Heart right ventricle (tissue), 16 donors: ENCODE measurements at regions of chr1 and their contacts with region 1.

Region 1: GRCh38 chr1:235415008-235415904 is 48.0 kb downstream of the TBCE start:
- DNase-seq: peak; percentile 37 to 51
- ATAC-seq: peak; percentile 52 to 82 (median 78)
- H3K4me3 ChIP-seq: no peak overlapping the region
- H3K27ac ChIP-seq: no peak overlapping the region
- H3K4me1 ChIP-seq: peaks cover 0 to 12% (median 3%) of the 10 kb centered on the region in 9 donors
- H3K27me3 ChIP-seq: no peaks in the 10 kb centered on the region
- CTCF ChIP-seq: peak; percentile 50 to 83 (median 76)

Region 2: DNA sequence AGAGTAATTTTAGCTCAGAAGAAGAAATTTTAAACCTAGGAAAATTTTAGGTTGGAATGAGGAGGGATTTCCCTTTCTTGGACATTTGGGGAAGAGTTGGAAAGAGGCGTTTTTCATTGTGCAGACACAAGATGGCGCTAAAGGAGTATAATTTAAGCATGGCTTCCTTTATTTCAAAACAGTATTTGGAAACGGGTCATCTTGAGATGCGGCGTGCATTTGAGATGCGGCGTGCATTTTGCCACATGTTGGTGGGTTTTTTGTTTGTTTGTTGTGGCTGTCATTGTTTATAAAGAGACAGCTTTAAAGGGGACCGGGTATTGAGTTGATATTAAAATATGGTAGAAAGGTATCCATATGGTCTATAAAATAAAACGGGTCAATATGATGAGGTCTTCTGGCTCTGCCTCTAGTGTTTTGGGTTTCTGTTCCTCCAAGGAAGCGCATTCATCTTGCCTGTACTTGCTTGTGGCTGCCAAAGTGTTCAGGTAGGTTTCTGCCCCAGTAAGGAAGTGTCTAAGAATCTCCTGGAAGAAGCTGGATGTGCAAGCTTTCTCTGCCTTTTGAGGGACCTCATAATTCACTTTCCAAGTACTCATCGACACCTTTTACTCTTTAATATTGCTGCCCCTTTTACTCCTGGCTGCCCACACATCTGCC is 1300.5 kb before region 1 on chr1:
- intact Hi-C with region 1: loop called in 1 of 10 experiments (anchors 10 kb)
- DNase-seq: peak in 1 of 2 donors; percentile 26
- ATAC-seq: no peak
- H3K4me3 ChIP-seq: no peak overlapping the region
- H3K27ac ChIP-seq: no peak overlapping the region
- H3K4me1 ChIP-seq: no peaks in the 10 kb centered on the region
- H3K27me3 ChIP-seq: peaks cover 0 to 24% (median 3%) of the 10 kb centered on the region in 7 donors
- CTCF ChIP-seq: peak; percentile 27 to 78 (median 70)

Region 3: DNA sequence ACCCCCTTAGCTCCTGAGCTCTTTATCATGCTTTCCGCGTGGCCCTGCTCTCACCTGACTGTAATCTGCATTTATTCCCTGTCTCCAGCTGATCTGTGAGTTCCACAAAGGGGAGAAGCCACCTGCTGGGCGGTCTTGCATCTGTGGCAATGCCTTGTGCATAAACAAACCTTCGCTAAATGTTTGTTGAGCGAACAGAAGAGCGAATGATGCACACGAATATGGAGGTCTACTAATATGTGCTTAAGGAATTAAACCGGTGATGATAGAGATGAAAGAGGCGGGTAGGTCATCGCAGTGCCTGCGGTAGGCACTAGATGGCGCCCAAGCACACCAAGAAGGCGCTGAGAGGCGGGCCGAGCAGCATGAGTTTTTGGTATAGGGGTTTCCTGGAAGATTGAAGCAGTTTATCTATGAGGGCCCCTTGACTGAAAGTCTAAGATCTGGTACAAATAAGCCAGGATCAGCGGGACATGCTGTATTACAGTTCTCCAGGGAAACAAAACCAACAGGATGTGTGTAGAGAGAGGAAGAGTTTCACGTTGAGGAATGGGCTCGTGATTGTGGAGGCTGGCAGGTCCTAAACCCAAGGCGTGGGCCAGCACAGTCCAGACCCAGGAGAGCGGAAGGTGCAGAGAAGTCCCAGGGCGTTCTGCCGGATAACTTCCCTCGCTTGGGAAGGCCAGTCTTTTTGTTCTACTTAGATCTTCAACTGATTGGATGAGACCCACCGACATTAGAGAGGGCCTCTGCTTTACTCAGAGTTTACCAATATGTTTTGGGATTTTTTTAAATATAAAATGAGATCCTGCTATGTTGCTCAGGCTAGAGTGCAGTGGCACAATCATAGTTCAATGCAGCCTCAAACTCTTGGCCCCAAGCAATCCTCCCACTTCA is 321.3 kb before region 1 on chr1:
- intact Hi-C with region 1: loop called in 1 of 10 experiments (anchors 10 kb)
- DNase-seq: peak; percentile 73 to 80
- ATAC-seq: peak; percentile 62 to 88 (median 80)
- H3K4me3 ChIP-seq: peak overlapping the region in 9 of 10 donors; percentile 11 to 50 (median 33)
- H3K27ac ChIP-seq: peak overlapping the region in 5 of 10 donors; percentile 24 to 67 (median 36)
- H3K4me1 ChIP-seq: peaks cover 3 to 15% (median 12%) of the 10 kb centered on the region in 9 donors
- H3K27me3 ChIP-seq: no peaks in the 10 kb centered on the region
- CTCF ChIP-seq: peak; percentile 86 to 94 (median 89)

Region 4: DNA sequence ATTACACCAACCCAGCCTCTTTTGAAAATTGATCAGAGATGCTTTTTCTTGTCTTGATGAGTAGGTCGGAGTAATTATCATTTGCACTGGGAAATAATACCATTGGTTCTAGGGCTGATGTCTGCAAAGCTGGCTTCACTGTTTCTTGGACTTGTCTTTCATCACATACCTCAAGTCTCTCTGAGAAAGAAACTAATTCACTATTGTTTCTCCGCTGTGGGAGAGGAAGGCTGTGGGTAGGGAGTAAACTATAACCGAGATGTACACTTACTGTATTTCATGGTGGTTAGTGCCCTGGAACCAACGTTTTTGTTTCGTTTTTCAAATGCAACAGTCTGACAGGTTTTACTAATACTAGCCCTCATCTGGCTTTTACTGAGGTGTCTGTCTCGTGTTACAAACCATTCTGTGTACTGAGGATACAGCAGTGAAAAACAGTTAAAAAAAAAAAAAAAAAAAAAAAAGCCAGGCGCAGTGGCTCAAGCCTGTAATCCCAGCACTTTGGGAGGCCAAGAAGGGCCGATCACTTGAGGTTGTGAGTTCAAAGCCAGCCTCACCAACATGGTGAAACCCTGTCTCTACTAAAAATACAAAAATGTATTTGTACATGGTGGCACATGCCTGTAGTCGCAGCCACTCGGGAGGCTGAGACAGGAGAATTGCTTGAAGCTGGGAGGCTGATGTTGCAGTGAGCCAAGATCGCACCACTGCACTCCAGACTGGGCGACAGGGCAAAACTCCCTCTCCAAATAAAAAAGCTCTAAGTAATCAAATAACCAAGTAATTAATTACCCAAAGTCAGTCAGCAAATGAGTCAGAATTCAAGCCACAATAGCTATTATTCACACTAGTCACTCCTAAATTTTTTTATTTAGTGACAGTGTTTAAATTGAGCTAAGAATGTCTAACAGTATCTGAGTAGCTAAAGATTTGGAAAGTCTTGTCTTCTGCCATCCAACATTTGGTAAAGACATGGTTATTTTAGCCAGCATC is 309.9 kb before region 1 on chr1:
- intact Hi-C with region 1: loop called in 6 of 10 experiments (anchors 2 to 10 kb)
- DNase-seq: no peak
- ATAC-seq: no peak
- H3K4me3 ChIP-seq: peak overlapping the region in 1 of 10 donors; percentile 14
- H3K27ac ChIP-seq: no peak overlapping the region
- H3K4me1 ChIP-seq: peaks cover 3 to 10% (median 6%) of the 10 kb centered on the region in 9 donors
- H3K27me3 ChIP-seq: no peaks in the 10 kb centered on the region
- CTCF ChIP-seq: no peak

Region 5: GRCh38 chr1:235286667-235287066 is 128.6 kb before region 1 on chr1:
- intact Hi-C with region 1: no loop called
- DNase-seq: no peak
- ATAC-seq: no peak
- H3K4me3 ChIP-seq: no peak overlapping the region
- H3K27ac ChIP-seq: no peak overlapping the region
- H3K4me1 ChIP-seq: peaks cover 0 to 64% (median 32%) of the 10 kb centered on the region in 9 donors
- H3K27me3 ChIP-seq: no peaks in the 10 kb centered on the region
- CTCF ChIP-seq: no peak

Region 6: GRCh38 chr1:235328357-235329138 is 86.7 kb before region 1 on chr1 and contains the start of gene GGPS1:
- intact Hi-C with region 1: loop called in 6 of 10 experiments (anchors 5 to 10 kb)
- DNase-seq: peak; percentile 98
- ATAC-seq: peak; percentile 91 to 98 (median 95)
- H3K4me3 ChIP-seq: peak within 1 kb of the TSS; percentile 81 to 97 (median 94)
- H3K27ac ChIP-seq: peak within 1 kb of the TSS; percentile 90 to 99 (median 96)
- H3K4me1 ChIP-seq: peaks cover 0 to 74% (median 66%) of the 10 kb centered on the region in 9 donors
- H3K27me3 ChIP-seq: no peaks in the 10 kb centered on the region
- CTCF ChIP-seq: no peak
- total RNA-seq, gene GGPS1: 27.6 to 40.0 (median 35.0) TPM

Region 7: DNA sequence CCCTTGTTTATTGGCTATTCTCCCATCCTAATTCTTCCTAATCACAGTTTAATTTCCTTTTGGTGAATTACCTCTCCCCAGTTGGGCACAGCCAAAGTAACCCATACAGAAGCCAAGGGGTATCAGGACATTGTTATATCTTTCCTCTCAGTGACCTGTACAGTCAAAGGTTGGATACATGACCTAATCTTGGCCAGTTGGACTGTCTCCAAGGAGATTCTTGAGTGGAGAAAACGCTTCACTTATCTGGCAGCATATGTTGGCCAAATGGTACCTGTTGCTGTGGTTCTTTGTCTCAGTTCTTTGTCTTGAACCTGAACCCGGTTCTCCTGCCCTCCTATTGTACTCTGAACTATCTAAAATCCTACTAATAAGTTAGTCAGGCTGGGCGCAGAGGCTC is 63.4 kb before region 1 on chr1:
- intact Hi-C with region 1: no loop called
- DNase-seq: no peak
- ATAC-seq: peak in 3 of 8 donors; percentile 38 to 49 (median 39)
- H3K4me3 ChIP-seq: no peak overlapping the region
- H3K27ac ChIP-seq: no peak overlapping the region
- H3K4me1 ChIP-seq: no peaks in the 10 kb centered on the region
- H3K27me3 ChIP-seq: no peaks in the 10 kb centered on the region
- CTCF ChIP-seq: no peak